PC-9 (cell line): ENCODE measurements at regions of chr4 and their contacts with region 1.

Region 1: GRCh38 chr4:173013232-173013930 is 155.2 kb upstream of the GALNT7 start:
- DNase-seq: peak in 1 of 2 experiments; percentile 41
- H3K4me3 ChIP-seq: no peak overlapping the region
- H3K27ac ChIP-seq: no peak overlapping the region
- H3K4me1 ChIP-seq: peaks cover 11% of the 10 kb centered on the region
- H3K27me3 ChIP-seq: no peaks in the 10 kb centered on the region
- CTCF ChIP-seq: peak; percentile 79

Region 2: DNA sequence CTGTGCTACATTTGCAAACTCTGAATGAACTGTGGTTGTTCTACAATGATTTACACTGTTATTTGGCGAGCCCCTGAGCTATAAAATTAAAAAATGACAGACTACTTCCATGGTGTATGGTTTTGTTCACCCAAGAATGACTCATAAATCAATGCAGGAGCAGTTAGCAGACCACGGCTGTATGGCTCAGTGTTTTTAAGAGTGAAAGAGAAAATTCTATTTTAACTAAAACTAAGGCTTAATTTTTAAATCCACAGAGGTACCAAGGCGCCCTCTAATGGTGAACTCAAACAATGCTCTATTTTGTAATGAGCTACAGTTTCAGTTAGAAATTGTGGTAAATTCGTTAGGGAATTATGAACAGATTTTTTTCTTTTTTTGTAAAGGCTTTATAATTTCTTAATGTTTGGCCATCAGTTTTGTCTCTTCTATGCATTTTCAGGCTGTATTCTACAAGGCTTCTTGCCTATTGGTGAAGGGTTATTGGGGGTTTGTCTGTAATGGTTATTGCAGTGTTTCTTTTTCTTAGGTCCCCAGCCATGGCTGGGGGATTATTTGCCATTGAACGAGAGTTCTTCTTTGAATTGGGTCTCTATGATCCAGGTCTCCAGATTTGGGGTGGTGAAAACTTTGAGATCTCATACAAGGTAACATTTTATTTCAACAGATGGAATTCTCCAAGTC is 288.3 kb after region 1 on chr4:
- CTCF ChIA-PET with region 1: interaction called, 27 read pairs
- POLR2A ChIA-PET with region 1: interaction called, 8 read pairs
- intact Hi-C with region 1: loop called (anchors 1 kb)
- DNase-seq: no peak
- H3K4me3 ChIP-seq: no peak overlapping the region
- H3K27ac ChIP-seq: no peak overlapping the region
- H3K4me1 ChIP-seq: no peaks in the 10 kb centered on the region
- H3K27me3 ChIP-seq: no peaks in the 10 kb centered on the region
- CTCF ChIP-seq: peak; percentile 71

Region 3: DNA sequence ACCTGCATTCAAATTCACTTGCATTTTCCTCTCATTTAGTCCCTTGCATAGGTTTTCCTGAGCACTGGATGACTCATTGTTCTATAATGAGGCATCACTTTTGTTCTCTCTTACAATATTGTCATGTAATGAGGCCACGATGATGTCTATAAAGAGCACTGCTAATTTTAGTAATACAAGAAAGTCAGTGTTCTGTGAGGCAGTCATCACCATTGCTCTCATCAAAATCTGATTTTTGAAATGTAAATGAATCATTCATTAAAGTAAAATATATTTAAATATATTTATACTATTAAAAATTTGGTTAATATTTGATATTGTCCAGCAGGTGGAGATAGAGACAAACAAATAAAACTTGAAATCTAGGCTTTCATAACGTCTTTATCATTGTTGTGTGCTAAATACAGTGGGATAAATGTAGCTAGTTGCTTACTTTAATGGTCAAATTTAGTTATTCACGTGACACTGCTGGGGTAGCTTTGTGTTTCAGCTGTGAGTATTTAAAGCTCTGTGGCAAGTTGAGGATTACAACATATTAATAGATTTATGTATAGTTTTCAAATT is 305.3 kb after region 1 on chr4:
- CTCF ChIA-PET with region 1: interaction called, 4 read pairs
- POLR2A ChIA-PET with region 1: no interaction called
- intact Hi-C with region 1: loop called (anchors 5 kb)
- DNase-seq: no peak
- H3K4me3 ChIP-seq: no peak overlapping the region
- H3K27ac ChIP-seq: no peak overlapping the region
- H3K4me1 ChIP-seq: no peaks in the 10 kb centered on the region
- H3K27me3 ChIP-seq: no peaks in the 10 kb centered on the region
- CTCF ChIP-seq: peak; percentile 66